Heart right ventricle (tissue), 16 donors: ENCODE measurements at regions of chr4 and their contacts with region 1.

Region 1: DNA sequence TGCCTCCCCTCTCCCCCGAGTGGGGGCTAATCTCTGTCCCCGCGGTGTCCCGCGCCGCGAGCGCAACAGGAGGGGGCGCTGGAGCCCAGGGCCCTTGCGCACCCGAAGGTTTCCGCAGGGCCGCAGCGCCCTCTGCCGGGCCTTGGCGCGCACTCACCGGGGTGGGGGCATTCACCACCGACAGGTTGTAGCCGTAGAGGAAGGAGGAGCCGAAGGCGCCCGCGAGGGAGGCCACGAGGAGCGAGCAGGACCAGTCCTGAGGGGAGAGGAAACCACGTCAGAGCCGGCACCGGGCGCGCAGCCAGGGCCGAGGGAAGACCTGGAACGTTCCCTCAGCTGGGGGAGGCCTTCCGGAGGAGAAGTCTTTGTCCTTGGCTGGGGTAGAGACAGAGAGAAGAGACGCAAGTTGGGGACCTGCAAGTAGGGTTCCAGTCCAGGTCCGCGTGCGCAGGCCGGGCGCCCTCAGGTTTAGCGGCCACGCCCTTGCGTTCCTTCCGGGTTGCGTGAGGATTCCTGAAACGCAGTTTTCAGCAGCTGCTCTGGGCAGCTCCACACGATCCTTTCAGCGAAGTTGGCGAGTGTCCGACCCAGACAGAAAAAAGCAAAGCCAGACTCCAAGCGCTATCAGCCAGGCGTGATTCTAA is 2.4 kb downstream of the SLC2A9 start:
- DNase-seq: peak; percentile 99
- ATAC-seq: peak; percentile 93 to 98 (median 96)
- H3K4me3 ChIP-seq: peak overlapping the region in 9 of 10 donors; percentile 8 to 56 (median 48)
- H3K27ac ChIP-seq: peak overlapping the region; percentile 83 to 93 (median 90)
- H3K4me1 ChIP-seq: peaks cover 11 to 59% (median 45%) of the 10 kb centered on the region in 9 donors
- H3K27me3 ChIP-seq: no peaks in the 10 kb centered on the region
- CTCF ChIP-seq: peak; percentile 98 to 100 (median 99)

Region 2: DNA sequence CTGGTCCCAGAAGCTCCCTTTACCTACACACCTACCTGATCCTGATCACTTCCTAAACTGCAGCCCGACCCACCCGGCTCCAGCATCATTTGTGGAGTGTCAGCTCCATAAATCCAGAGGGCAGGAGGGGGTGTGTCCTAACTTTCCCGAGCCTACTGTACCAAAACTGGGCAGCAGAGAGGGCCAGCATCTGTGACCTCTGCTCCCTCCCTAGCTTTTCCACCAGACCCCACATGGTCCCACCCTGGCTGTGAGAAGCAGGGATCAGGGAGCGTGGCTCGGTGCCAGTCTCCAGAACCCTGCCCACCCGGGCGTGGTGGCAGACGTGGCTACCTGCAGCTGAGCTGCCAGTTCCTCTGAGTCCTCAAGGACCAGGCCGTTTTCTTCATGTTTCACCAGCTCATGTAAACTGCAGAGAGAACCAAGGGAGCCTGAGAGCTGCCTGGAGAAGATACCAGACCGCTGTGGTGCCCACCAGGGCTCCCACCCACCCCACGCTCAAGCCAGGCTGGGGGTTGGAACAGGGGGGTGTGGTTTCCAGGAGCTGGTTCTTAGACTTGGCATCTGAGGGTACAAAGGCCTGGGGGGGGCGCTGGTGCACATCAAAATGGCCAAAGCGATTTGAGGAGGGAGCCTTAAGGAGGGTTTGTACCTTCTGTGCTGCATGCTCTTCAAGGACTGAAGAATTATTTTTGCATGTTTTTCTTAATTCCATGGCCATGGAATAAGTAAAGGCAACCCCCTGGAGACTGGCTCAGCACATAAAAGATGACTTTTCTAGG is 314.2 kb before region 1 on chr4:
- intact Hi-C with region 1: loop called in 5 of 10 experiments (anchors 5 to 10 kb)
- DNase-seq: no peak
- ATAC-seq: no peak
- H3K4me3 ChIP-seq: no peak overlapping the region
- H3K27ac ChIP-seq: no peak overlapping the region
- H3K4me1 ChIP-seq: no peaks in the 10 kb centered on the region
- H3K27me3 ChIP-seq: peaks cover 0 to 7% (median 0%) of the 10 kb centered on the region in 7 donors
- CTCF ChIP-seq: no peak

Region 3: DNA sequence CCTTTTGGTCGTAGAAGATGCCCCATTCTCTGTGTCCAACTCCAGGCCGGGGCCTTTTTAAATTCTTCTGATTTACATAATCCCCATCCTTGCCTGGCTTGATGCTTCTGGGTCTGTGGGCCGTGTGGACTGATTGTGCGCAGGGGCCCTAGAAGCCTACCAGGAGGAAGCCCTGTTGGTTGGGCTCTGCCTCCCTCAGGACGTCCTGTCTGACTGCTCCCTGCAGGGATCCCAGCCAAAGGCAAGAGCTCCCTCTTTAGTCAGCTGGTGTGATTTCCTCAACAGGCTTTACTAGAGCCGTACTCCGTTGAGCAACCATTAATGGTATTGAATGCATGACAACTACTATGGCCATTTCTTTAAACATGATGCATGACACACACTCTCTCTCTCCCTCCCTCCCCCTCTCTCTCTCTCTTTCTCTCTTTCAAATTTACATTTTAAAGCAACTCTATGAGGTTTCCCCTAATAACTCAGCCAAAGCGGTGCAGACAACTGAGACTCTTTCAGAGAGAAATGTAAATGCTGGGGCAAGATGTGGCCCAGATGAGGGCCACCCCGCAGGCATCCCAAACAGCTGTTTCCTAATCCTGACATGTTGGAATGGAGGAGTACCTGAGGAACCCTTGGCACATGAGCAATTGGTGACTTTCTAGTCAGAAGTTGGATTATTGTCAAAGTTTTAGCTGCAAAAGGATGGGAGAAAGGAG is 120.2 kb before region 1 on chr4:
- intact Hi-C with region 1: loop called in 6 of 10 experiments (anchors 5 to 10 kb)
- DNase-seq: peak; percentile 46 to 65
- ATAC-seq: peak; percentile 88 to 95 (median 91)
- H3K4me3 ChIP-seq: no peak overlapping the region
- H3K27ac ChIP-seq: no peak overlapping the region
- H3K4me1 ChIP-seq: peaks cover 0 to 18% (median 5%) of the 10 kb centered on the region in 9 donors
- H3K27me3 ChIP-seq: no peaks in the 10 kb centered on the region
- CTCF ChIP-seq: peak; percentile 23 to 71 (median 58)

Region 4: DNA sequence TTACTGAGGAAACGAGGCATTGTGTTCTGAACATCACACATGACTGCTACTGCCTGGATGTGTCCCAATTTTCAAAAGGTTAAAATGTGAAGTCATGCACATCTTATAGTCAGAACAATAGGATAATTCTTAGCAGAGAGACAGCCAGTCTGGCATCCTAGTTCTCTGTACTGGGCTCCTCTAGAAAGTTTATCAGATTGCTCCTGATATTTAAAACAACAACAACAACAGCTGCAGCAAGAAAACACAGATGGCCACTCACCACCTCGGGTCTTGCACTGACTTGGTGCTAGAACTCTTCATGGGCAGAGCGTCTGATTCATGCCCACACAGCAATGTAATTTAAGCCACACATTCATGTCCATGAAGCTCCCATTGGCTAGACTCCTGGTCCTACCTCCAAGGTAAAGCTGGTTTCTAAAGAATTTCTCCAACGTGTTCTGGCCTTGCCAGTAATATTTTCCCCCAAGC is 35.7 kb after region 1 on chr4:
- intact Hi-C with region 1: loop called in 1 of 10 experiments (anchors 2 kb)
- DNase-seq: no peak
- ATAC-seq: peak; percentile 50 to 84 (median 73)
- H3K4me3 ChIP-seq: no peak overlapping the region
- H3K27ac ChIP-seq: peak overlapping the region; percentile 13 to 86 (median 46)
- H3K4me1 ChIP-seq: peaks cover 0 to 44% (median 12%) of the 10 kb centered on the region in 9 donors
- H3K27me3 ChIP-seq: no peaks in the 10 kb centered on the region
- CTCF ChIP-seq: no peak

Region 5: GRCh38 chr4:10069075-10069642 is 50.2 kb after region 1 on chr4:
- intact Hi-C with region 1: loop called in 2 of 10 experiments (anchors 5 kb)
- DNase-seq: no peak
- ATAC-seq: no peak
- H3K4me3 ChIP-seq: no peak overlapping the region
- H3K27ac ChIP-seq: no peak overlapping the region
- H3K4me1 ChIP-seq: peaks cover 0 to 2% (median under 1%) of the 10 kb centered on the region in 9 donors
- H3K27me3 ChIP-seq: no peaks in the 10 kb centered on the region
- CTCF ChIP-seq: no peak

Region 6: GRCh38 chr4:10116580-10117358 is 97.8 kb after region 1 on chr4 and contains the start of gene WDR1:
- intact Hi-C with region 1: loop called in 3 of 10 experiments (anchors 1 to 10 kb)
- DNase-seq: peak; percentile 95 to 98
- ATAC-seq: peak; percentile 96 to 98 (median 97)
- H3K4me3 ChIP-seq: peak within 1 kb of the TSS; percentile 60 to 86 (median 79)
- H3K27ac ChIP-seq: peak within 1 kb of the TSS; percentile 92 to 98 (median 95)
- H3K4me1 ChIP-seq: peaks cover 7 to 57% (median 42%) of the 10 kb centered on the region in 9 donors
- H3K27me3 ChIP-seq: no peaks in the 10 kb centered on the region
- CTCF ChIP-seq: no peak
- total RNA-seq, gene WDR1: 155 to 302 (median 177) TPM